ENCODE measurements at regions of chr7 and their contacts with region 1.

Region 1: GRCh38 chr7:22896917-22897316 is 74.3 kb upstream of the TOMM7 start:
- DNase-seq: no peak
- ATAC-seq: no peak
- H3K4me3 ChIP-seq: no peak overlapping the region
- H3K27ac ChIP-seq: no peak overlapping the region
- H3K4me1 ChIP-seq: no peaks in the 10 kb centered on the region
- H3K27me3 ChIP-seq: no peaks in the 10 kb centered on the region
- CTCF ChIP-seq: no peak
- EP300 ChIP-seq: no peak
- POLR2A ChIP-seq: no peak
- RAD21 ChIP-seq: no peak

Region 2: DNA sequence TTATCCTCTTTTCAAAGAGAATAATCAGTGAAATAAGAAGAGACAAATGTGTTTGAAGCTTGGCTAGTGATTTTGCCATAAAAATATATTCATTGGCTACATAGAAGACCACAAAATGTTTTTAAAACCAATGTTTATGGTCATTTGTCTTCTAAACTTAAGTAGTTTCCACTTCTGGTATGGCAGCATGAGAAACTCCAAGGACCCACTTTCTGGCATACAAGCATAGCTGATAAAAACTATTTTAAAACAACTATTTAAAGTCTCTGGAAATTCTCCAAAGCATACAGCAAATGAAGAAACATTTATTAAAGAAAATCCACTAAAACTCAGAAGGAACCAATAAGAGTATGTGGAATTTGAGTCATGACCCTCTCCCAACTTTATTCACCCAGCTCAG is 15.0 kb after region 1 on chr7:
- CTCF ChIA-PET with region 1: interaction called, 4 read pairs
- POLR2A ChIA-PET with region 1: no interaction called
- RAD21 ChIA-PET with region 1: no interaction called
- SMC1A ChIA-PET with region 1: interaction called, 12 read pairs
- in situ Hi-C with region 1: no loop called
- intact Hi-C with region 1: no loop called
- DNase-seq: no peak
- ATAC-seq: no peak
- H3K4me3 ChIP-seq: no peak overlapping the region
- H3K27ac ChIP-seq: no peak overlapping the region
- H3K4me1 ChIP-seq: no peaks in the 10 kb centered on the region
- H3K27me3 ChIP-seq: no peaks in the 10 kb centered on the region
- CTCF ChIP-seq: no peak
- EP300 ChIP-seq: no peak
- POLR2A ChIP-seq: no peak
- RAD21 ChIP-seq: no peak

Measured in GM12878 (cell line).